ENCODE measurements at regions of chr6 and their contacts with region 1.

Region 1: DNA sequence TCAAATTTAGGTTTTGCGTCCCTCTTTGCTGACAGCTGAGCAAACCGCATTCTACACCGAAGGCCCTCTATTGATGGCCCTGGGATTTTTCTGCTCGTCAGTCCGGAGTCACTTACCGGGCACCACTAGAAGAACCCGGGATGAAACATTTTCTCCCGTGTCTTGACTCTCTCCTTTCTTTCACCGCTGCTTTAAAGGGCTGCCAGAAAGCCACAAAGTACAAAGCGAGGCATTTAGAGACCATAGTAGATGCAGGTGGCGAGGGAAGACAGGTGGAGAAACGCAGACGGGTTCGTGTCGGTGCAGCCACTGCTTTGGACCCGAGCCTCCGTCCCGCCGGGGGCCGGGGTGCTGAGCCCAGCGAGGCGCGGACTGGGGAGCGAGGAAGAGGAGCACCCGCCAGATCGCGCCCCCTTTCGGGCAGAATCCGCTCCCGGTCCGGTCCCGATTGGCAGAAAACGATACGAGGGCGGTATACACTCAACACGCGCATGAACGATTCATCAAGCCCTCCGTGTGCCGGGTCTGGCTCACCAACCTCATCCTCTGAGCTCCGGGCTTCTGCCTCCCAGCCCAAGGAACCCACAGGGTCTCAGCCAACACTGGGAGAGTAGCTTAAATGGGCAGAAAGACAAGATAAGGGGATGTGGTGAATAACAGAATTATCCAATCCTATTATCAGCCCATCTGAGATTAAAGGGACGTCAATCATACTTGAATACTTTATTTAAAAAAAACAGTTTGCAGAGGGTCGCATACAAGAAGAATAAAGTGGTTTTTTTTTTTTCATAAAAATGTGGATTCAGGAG is 84.9 kb downstream of the TRIM27 start:
- DNase-seq: peak; percentile 74 to 89
- ATAC-seq: peak; percentile 76 to 83 (median 80)
- H3K4me3 ChIP-seq: peak overlapping the region; percentile 58
- H3K4me3 Mint-ChIP-seq: peak overlapping the region; percentile 98
- H3K27ac ChIP-seq: peak overlapping the region; percentile 62
- H3K27ac Mint-ChIP-seq: peak overlapping the region; percentile 93 to 98
- H3K4me1 ChIP-seq: peaks cover 20% of the 10 kb centered on the region
- H3K4me1 Mint-ChIP-seq: peaks cover 22 to 28% of the 10 kb centered on the region in 2 donors
- H3K27me3 ChIP-seq: peaks cover 14% of the 10 kb centered on the region
- H3K27me3 Mint-ChIP-seq: peaks cover 24 to 35% of the 10 kb centered on the region in 2 donors
- CTCF ChIP-seq: peak; percentile 63

Region 2: GRCh38 chr6:28315628-28316027 is 523.2 kb before region 1 on chr6:
- intact Hi-C with region 1: no loop called
- DNase-seq: no peak
- ATAC-seq: no peak
- H3K4me3 ChIP-seq: no peak overlapping the region
- H3K4me3 Mint-ChIP-seq: no peak overlapping the region
- H3K27ac ChIP-seq: no peak overlapping the region
- H3K27ac Mint-ChIP-seq: no peak overlapping the region
- H3K4me1 ChIP-seq: no peaks in the 10 kb centered on the region
- H3K4me1 Mint-ChIP-seq: no peaks in the 10 kb centered on the region
- H3K27me3 ChIP-seq: no peaks in the 10 kb centered on the region
- H3K27me3 Mint-ChIP-seq: peaks cover 15 to 39% of the 10 kb centered on the region in 2 donors
- CTCF ChIP-seq: no peak

Region 3: DNA sequence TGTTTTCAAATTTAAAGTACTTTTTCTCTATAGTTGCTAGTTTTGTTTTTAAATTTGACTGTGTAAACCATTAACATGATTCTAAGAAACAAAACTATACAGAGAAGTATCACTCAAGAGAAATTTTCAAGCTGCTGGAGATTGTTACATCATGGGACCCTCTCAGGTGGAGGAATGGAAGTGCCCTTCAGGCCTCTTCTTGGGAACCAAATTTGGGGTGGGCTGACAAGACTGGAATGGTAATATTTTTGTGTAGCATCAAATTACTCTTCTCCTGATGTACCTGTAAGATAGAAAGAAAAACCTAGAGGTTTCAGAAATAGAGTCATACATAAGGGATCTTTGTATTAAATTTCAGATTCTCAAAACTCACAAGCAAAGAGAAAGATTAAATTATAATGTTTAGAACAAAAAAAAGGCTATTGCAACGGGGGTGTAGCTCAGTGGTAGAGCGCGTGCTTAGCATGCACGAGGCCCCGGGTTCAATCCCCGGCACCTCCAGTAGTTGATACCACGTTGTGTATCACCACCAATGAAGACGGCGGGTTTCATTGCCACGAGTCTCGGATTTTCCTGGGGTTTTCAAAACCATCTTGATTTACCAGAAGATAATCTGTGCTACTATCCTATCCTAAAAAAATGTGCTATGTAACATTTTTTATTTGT is 119.4 kb before region 1 on chr6:
- intact Hi-C with region 1: no loop called
- DNase-seq: no peak
- ATAC-seq: no peak
- H3K4me3 ChIP-seq: no peak overlapping the region
- H3K4me3 Mint-ChIP-seq: no peak overlapping the region
- H3K27ac ChIP-seq: no peak overlapping the region
- H3K27ac Mint-ChIP-seq: no peak overlapping the region
- H3K4me1 ChIP-seq: no peaks in the 10 kb centered on the region
- H3K4me1 Mint-ChIP-seq: no peaks in the 10 kb centered on the region
- H3K27me3 ChIP-seq: peaks cover 11% of the 10 kb centered on the region
- H3K27me3 Mint-ChIP-seq: peaks cover 17 to 51% of the 10 kb centered on the region in 2 donors
- CTCF ChIP-seq: no peak

Region 4: DNA sequence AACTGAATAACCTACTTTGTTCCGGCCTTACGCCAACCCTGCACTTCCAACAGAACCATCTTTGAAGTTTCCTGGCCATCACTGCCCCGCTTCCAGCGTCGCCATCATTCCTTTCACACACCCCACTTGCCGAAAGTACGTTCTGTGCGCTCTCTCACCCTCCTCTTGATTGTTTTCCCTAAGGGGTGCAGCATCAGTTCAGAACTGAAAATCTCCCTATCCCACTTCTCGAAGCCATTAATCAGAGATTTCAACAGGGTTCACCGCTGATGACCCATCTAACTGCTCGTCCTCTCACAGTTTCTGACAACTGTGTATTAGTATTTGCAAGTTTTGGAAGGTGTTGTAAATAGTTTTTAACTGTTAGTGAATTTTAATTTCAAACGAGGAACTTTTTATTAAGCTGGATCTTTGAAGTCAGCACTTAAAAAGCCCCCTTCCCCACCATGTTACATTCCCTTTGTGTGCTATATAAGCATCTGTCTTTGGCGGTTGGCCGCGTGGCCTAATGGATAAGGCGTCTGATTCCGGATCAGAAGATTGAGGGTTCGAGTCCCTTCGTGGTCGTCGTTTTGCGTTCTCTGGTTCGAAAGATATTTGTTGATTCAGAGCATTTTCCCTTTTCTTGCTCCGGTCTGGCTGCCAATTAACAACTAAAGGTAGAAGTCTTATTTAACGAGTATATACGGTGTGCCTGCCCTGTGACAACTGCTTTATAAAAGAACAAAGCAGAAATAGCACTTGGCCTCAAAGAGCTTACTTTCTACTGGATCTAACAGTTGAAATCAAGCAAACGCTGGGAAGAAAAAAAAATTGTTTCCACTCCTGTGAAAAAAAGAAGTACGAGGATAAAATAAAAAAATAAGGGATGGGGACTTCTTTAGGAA is 42.3 kb after region 1 on chr6:
- intact Hi-C with region 1: loop called (anchors 5 kb)
- DNase-seq: peak; percentile 60 to 74
- ATAC-seq: no peak
- H3K4me3 ChIP-seq: peak overlapping the region; percentile 32
- H3K4me3 Mint-ChIP-seq: peak overlapping the region; percentile 93
- H3K27ac ChIP-seq: no peak overlapping the region
- H3K27ac Mint-ChIP-seq: peak overlapping the region; percentile 84 to 96
- H3K4me1 ChIP-seq: peaks cover 31% of the 10 kb centered on the region
- H3K4me1 Mint-ChIP-seq: peaks cover 32 to 33% of the 10 kb centered on the region in 2 donors
- H3K27me3 ChIP-seq: peaks cover 6% of the 10 kb centered on the region
- H3K27me3 Mint-ChIP-seq: peaks cover 15 to 20% of the 10 kb centered on the region in 2 donors
- CTCF ChIP-seq: no peak

Region 5: GRCh38 chr6:28923318-28924102 is 84.7 kb after region 1 on chr6 and contains the start of gene TRIM27:
- intact Hi-C with region 1: loop called (anchors 1 kb)
- DNase-seq: peak; percentile 81 to 89
- ATAC-seq: peak; percentile 86 to 93 (median 90)
- H3K4me3 ChIP-seq: peak within 1 kb of the TSS; percentile 81
- H3K4me3 Mint-ChIP-seq: peak within 1 kb of the TSS; percentile 96
- H3K27ac ChIP-seq: peak within 1 kb of the TSS; percentile 84
- H3K27ac Mint-ChIP-seq: peak within 1 kb of the TSS; percentile 86 to 92
- H3K4me1 ChIP-seq: peaks cover 15% of the 10 kb centered on the region
- H3K4me1 Mint-ChIP-seq: peaks cover 32 to 37% of the 10 kb centered on the region in 2 donors
- H3K27me3 ChIP-seq: no peaks in the 10 kb centered on the region
- H3K27me3 Mint-ChIP-seq: peaks cover 0 to 2% of the 10 kb centered on the region in 2 donors
- CTCF ChIP-seq: no peak
- total RNA-seq, gene TRIM27: 19.3 to 33.6 (median 25.1) TPM

Region 6: GRCh38 chr6:28981833-28982475 is 143.1 kb after region 1 on chr6:
- intact Hi-C with region 1: loop called (anchors 1 kb)
- DNase-seq: peak; percentile 68 to 89
- ATAC-seq: peak; percentile 72 to 86 (median 73)
- H3K4me3 ChIP-seq: peak overlapping the region; percentile 86
- H3K4me3 Mint-ChIP-seq: peak overlapping the region; percentile 97
- H3K27ac ChIP-seq: peak overlapping the region; percentile 28
- H3K27ac Mint-ChIP-seq: peak overlapping the region; percentile 95 to 99
- H3K4me1 ChIP-seq: peaks cover 19% of the 10 kb centered on the region
- H3K4me1 Mint-ChIP-seq: peaks cover 66 to 67% of the 10 kb centered on the region in 2 donors
- H3K27me3 ChIP-seq: peaks cover 24% of the 10 kb centered on the region
- H3K27me3 Mint-ChIP-seq: peaks cover 41 to 68% of the 10 kb centered on the region in 2 donors
- CTCF ChIP-seq: no peak

Region 7: DNA sequence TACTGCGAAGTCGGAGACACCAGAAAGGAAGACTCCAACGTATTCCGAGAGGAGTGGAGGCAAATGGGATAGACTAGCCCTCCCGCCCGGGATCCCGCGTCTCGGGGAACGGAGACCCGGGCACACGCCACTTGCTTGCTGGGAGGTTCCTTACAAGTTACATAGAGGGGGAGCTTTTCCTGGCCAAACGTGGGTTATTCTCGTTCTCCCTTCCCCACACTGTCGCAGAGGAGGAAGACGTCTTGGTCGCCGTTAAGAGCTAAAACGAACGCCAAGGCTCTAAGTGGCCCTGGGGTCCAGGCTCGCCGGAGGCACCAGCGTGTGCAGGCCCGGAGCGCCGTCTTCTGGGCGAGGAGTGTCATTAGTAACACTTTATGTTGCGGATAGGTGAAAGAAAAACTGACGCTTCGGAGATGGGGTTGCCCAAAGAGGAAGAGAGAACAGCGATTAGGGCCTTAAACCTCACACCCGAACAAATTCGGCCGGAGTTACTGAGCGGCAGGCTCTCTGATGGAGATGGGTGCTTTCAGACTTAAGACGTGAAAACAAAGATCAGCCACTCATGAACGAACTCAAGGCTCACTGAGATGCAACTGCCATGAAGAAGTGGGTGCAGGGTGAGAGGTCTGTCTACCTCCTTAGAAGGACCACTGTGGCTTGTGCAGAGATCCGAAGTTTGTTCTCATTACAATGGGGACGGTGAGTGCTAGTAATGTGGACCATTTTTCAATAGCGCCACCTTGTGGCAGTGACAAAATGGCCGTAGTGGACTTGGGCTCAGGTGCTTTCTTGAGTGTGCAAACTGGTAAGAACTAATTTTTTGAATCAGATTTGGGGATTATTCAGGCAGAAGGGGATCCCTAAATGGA is 178.0 kb after region 1 on chr6:
- intact Hi-C with region 1: loop called (anchors 1 kb)
- DNase-seq: peak; percentile 73 to 92
- ATAC-seq: peak; percentile 84 to 87 (median 86)
- H3K4me3 ChIP-seq: peak overlapping the region; percentile 61
- H3K4me3 Mint-ChIP-seq: peak overlapping the region; percentile 92
- H3K27ac ChIP-seq: peak overlapping the region; percentile 29
- H3K27ac Mint-ChIP-seq: peak overlapping the region; percentile 22 to 81
- H3K4me1 ChIP-seq: peaks cover 15% of the 10 kb centered on the region
- H3K4me1 Mint-ChIP-seq: peaks cover 17 to 19% of the 10 kb centered on the region in 2 donors
- H3K27me3 ChIP-seq: peaks cover 37% of the 10 kb centered on the region
- H3K27me3 Mint-ChIP-seq: peaks cover 50 to 71% of the 10 kb centered on the region in 2 donors
- CTCF ChIP-seq: peak; percentile 89

Measured in natural killer cell (primary cell).